ENCODE measurements at regions of chr22 and their contacts with region 1.

Region 1: GRCh38 chr22:40950962-40951794 is at the start of gene RBX1:
- DNase-seq: peak; percentile 94 to 96
- ATAC-seq: peak; percentile 96
- H3K4me3 ChIP-seq: peak within 1 kb of the TSS; percentile 65
- H3K27ac ChIP-seq: peak within 1 kb of the TSS; percentile 93
- H3K4me1 ChIP-seq: peaks cover 8% of the 10 kb centered on the region; the same call in 1 of the 3 replicates
- CTCF ChIP-seq: no peak
- EP300 ChIP-seq: no peak
- POLR2A ChIP-seq: peak; percentile 56
- RAD21 ChIP-seq: 0 out of 5 replicates have a peak, but pooled peaks of 1 of the 2 experiments have one; percentile 15
- polyA plus RNA-seq, gene RBX1: 70.7 and 82.3 TPM in 2 replicates

Region 2: DNA sequence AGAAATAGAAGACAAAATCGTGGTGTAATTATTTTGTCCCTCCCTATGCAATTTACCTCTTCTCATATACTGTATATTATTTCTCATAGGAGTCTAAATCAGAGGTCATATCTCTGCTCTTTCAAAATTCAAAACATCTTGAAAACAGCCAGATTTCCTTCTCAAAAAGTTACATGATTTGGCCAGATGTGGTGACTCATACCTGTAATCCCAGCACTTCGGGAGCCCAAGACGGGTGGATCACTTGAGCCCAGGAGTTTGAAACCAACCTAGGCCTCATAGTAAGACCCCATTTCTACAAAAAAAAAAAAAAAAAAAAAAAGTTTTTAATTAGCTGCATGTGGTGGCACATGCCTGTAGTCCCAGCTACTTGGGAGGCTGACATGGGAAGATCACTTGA is 60.3 kb before region 1 on chr22:
- CTCF ChIA-PET with region 1: no interaction called
- POLR2A ChIA-PET with region 1: no interaction called
- DNase-seq: no peak
- ATAC-seq: no peak
- H3K4me3 ChIP-seq: no peak overlapping the region
- H3K27ac ChIP-seq: no peak overlapping the region
- H3K4me1 ChIP-seq: no peaks in the 10 kb centered on the region
- CTCF ChIP-seq: no peak
- EP300 ChIP-seq: no peak
- POLR2A ChIP-seq: no peak
- RAD21 ChIP-seq: no peak

Region 3: GRCh38 chr22:40922484-40923303 is 28.5 kb before region 1 on chr22:
- CTCF ChIA-PET with region 1: interaction called, 6 read pairs
- POLR2A ChIA-PET with region 1: interaction called, 13 read pairs
- DNase-seq: peak; percentile 20 to 47
- ATAC-seq: peak; percentile 59 to 77; a peak in 3 of 6 replicates
- H3K4me3 ChIP-seq: no peak overlapping the region
- H3K27ac ChIP-seq: no peak overlapping the region
- H3K4me1 ChIP-seq: no peaks in the 10 kb centered on the region
- CTCF ChIP-seq: peak; percentile 62
- EP300 ChIP-seq: no peak
- POLR2A ChIP-seq: no peak
- RAD21 ChIP-seq: peak; percentile 67 to 71

Region 4: DNA sequence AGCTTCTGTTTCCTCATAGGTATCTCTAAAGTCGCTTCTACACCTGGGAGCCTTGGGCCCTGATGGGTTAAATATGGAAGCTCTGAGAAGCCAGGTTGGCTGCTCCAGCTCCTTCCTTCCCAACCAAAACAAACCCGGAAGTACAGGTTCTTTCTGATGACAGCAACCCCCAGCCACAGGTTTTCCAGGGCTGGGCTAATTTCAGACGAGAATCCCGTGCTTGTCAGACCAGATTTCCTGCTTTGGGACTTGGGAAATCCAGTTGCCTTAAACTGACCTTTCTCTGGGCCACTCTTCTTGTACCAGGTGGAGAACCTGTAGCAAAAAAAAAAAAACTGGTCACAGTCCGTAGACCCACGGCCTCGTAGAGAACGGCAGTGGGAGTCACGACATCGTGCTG is 51.9 kb after region 1 on chr22:
- CTCF ChIA-PET with region 1: no interaction called
- POLR2A ChIA-PET with region 1: interaction called, 10 read pairs
- DNase-seq: no peak
- ATAC-seq: no peak
- H3K4me3 ChIP-seq: no peak overlapping the region
- H3K27ac ChIP-seq: no peak overlapping the region
- H3K4me1 ChIP-seq: peaks cover 7% of the 10 kb centered on the region; the same call in 1 of the 3 replicates
- CTCF ChIP-seq: no peak
- EP300 ChIP-seq: no peak
- POLR2A ChIP-seq: no peak
- RAD21 ChIP-seq: no peak

Region 5: GRCh38 chr22:41022470-41023298 is 71.5 kb after region 1 on chr22:
- CTCF ChIA-PET with region 1: no interaction called
- POLR2A ChIA-PET with region 1: interaction called, 29 read pairs
- DNase-seq: peak; percentile 52 to 83
- ATAC-seq: peak; percentile 80 to 86
- H3K4me3 ChIP-seq: peak overlapping the region; percentile 59
- H3K27ac ChIP-seq: peak overlapping the region; percentile 85 to 100
- H3K4me1 ChIP-seq: peaks cover 7% of the 10 kb centered on the region; the same call in 1 of the 3 replicates
- CTCF ChIP-seq: no peak
- EP300 ChIP-seq: no peak; a peak in 1 of 5 replicates
- POLR2A ChIP-seq: 0 out of 2 replicates have a peak, but pooled peaks have one; percentile 4
- RAD21 ChIP-seq: no peak

Region 6: GRCh38 chr22:41091132-41092022 is 140.2 kb after region 1 on chr22:
- CTCF ChIA-PET with region 1: no interaction called
- POLR2A ChIA-PET with region 1: interaction called, 32 read pairs
- DNase-seq: peak; percentile 91 to 98
- ATAC-seq: peak; percentile 87 to 92
- H3K4me3 ChIP-seq: peak overlapping the region; percentile 90
- H3K27ac ChIP-seq: peak overlapping the region; percentile 99 to 100
- H3K4me1 ChIP-seq: peaks cover 22% of the 10 kb centered on the region
- CTCF ChIP-seq: no peak
- EP300 ChIP-seq: no peak
- POLR2A ChIP-seq: peak; percentile 76
- RAD21 ChIP-seq: no peak; a peak in 1 of 5 replicates